ENCODE measurements at regions of chr1 and their contacts with region 1.

Region 1: GRCh38 chr1:233440951-233441401 is 113.5 kb downstream of the MAP3K21 start:
- DNase-seq: peak; percentile 7
- ATAC-seq: no peak
- H3K4me3 Mint-ChIP-seq: no peak overlapping the region
- H3K27ac Mint-ChIP-seq: no peak overlapping the region
- H3K4me1 Mint-ChIP-seq: no peaks in the 10 kb centered on the region
- H3K27me3 Mint-ChIP-seq: peaks cover 14% of the 10 kb centered on the region

Region 2: DNA sequence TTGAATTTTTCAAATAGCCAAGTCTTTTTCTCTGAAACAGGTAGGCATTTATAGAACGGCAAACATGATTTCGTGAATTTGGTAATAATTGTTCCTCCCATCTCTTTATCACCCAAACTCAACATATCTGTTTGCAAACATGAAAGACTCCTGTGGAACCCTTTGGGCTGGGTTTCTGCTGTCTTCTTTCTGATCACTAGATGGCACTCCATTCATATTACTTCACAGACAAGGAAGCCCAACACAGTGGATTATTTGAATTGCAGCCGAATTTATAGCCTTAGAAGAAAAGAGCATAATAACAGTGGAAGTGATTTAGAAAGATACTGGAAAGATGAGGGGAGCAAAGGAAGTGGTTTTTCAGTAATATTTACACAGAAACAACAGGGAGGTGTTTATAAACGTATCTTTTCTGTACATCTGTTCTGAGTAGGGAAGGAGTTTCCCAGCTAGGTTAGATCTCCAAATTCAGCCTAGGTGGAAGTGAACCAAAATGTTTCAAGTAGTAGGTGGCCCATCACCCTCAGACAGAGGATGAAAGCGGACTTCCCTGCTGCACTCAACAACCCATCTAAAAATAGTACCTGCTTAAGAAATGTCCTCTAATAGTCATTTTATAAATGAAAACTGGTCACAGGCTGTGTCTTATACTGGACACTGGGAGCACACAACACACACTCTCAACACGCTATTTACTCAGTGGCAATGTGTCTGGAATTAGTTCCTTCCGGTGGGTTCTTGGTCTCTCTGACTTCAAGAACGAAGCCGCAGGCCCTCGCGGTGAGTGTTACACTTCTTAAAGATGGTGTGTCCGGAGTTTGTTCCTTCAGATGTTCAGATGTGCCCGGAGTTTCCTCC is 45.9 kb before region 1 on chr1:
- CTCF ChIA-PET with region 1: interaction called, 11 read pairs
- POLR2A ChIA-PET with region 1: no interaction called
- intact Hi-C with region 1: loop called in 1 of 2 experiments (anchors 2 kb)
- DNase-seq: peak; percentile 27
- ATAC-seq: peak; percentile 75
- H3K4me3 Mint-ChIP-seq: no peak overlapping the region
- H3K27ac Mint-ChIP-seq: no peak overlapping the region
- H3K4me1 Mint-ChIP-seq: no peaks in the 10 kb centered on the region
- H3K27me3 Mint-ChIP-seq: peaks cover 26% of the 10 kb centered on the region

Region 3: GRCh38 chr1:233424779-233425178 is 16.2 kb before region 1 on chr1:
- CTCF ChIA-PET with region 1: interaction called, 16 read pairs
- POLR2A ChIA-PET with region 1: no interaction called
- intact Hi-C with region 1: no loop called
- DNase-seq: no peak
- ATAC-seq: no peak
- H3K4me3 Mint-ChIP-seq: no peak overlapping the region
- H3K27ac Mint-ChIP-seq: no peak overlapping the region
- H3K4me1 Mint-ChIP-seq: no peaks in the 10 kb centered on the region
- H3K27me3 Mint-ChIP-seq: peaks cover 28% of the 10 kb centered on the region

Region 4: DNA sequence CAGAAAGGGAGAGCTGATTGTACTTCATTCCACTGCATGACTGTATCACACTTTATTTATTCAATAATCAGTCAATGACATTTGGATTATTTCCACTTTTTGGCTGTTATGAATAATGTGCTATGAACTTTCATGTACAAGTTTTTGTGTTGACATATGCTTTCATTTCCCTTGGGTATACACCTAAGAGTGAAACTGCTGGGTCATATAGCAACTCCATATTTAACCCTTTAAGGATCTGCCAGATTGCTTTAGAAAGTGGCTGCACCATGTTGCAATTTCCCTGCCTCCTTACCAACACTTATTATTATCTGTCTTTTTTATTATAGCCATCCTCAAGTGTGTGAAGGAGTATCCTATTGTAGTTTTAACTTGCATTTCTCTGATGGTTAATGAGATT is 64.2 kb after region 1 on chr1:
- CTCF ChIA-PET with region 1: no interaction called
- POLR2A ChIA-PET with region 1: no interaction called
- intact Hi-C with region 1: no loop called
- DNase-seq: no peak
- ATAC-seq: peak; percentile 33
- H3K4me3 Mint-ChIP-seq: no peak overlapping the region
- H3K27ac Mint-ChIP-seq: no peak overlapping the region
- H3K4me1 Mint-ChIP-seq: no peaks in the 10 kb centered on the region
- H3K27me3 Mint-ChIP-seq: peaks cover 10% of the 10 kb centered on the region

Region 5: DNA sequence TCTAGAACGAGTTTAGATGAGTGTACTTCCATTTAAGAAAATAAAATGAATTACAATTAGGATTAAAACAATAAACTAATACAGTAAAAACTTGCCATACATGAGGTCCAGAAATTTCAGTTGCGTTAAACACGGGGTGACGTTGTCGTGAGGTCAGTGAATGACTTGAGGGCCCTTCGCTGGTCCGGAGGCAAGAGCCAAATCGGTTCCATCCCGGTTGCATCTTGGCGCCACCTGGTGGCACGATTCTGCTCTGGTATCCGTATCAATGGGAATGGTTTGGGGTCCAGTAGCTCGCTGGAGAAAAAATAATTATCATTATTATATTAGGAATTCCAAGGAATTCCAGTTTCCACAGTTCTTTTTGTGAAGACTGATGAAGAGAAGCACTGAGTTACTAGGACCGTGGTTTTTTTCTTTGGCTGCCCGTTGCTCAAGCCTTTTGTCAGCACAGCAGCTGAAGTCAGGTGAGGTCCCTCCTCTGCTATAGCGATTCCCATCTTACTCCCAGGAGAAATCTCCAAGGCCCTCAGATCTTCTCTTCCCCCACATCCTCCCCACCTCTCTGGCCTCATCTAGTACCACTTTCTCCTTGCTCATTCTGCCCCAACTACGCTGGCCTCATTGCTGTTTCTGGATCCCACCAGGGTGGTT is 624.9 kb after region 1 on chr1:
- CTCF ChIA-PET with region 1: interaction called, 19 read pairs
- POLR2A ChIA-PET with region 1: no interaction called
- intact Hi-C with region 1: loop called (anchors 1 to 2 kb)
- DNase-seq: peak; percentile 84
- ATAC-seq: peak; percentile 47
- H3K4me3 Mint-ChIP-seq: no peak overlapping the region
- H3K27ac Mint-ChIP-seq: no peak overlapping the region
- H3K4me1 Mint-ChIP-seq: no peaks in the 10 kb centered on the region
- H3K27me3 Mint-ChIP-seq: peaks cover 12% of the 10 kb centered on the region